AG04450 (cell line): ENCODE measurements at regions of chrX and their contacts with region 1.

Region 1: DNA sequence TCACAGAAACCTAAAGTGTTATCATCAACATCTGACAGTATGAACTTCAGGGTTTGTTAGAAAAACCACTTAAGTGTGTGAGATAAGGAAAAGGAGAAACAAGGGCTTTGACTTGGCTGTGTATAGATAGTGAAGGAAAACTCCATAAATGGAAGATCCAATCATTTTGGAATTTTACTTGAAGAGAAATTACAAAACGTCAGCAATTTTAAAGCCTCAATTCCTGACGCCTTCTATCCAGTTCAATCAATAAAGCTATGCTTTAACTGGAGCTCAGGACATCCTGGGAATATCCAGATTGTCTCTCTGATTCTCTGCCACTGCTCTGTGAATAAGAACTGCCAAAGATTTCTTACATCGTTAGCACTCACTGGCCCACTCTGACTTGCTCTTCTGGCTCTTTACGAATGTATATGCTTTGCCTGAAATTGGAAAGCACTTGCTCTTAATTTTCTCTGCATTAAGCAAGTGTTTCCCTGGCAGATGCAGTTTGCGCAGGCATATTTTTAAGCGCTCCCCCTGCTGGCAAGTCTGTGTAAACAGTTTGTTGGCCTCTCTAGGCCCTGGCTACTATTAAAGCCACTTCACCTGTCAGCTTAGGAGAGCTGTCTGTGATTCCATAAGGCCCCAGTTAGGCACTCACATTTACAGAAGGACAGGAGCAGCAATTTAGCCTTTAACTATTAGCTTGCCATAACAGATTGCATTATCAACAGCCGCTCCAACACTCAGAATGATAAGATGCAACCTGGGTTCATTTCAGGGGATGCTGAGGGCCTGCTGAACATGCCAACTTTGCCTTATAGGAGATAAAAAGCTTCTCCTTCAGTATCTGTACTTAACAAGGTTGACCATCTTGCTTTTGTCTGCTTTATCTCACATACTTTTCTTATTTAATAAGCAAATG is 251.4 kb upstream of the DDX53 start:
- DNase-seq: no peak
- H3K4me3 ChIP-seq: no peak overlapping the region
- H3K27ac ChIP-seq: no peak overlapping the region
- H3K27me3 ChIP-seq: no peaks in the 10 kb centered on the region
- CTCF ChIP-seq: peak; percentile 66

Region 2: GRCh38 chrX:22730542-22730941 is 17.8 kb before region 1 on chrX:
- CTCF ChIA-PET with region 1: interaction called, 10 read pairs
- POLR2A ChIA-PET with region 1: no interaction called
- DNase-seq: no peak
- H3K4me3 ChIP-seq: no peak overlapping the region
- H3K27ac ChIP-seq: no peak overlapping the region
- H3K27me3 ChIP-seq: no peaks in the 10 kb centered on the region
- CTCF ChIP-seq: no peak

Region 3: DNA sequence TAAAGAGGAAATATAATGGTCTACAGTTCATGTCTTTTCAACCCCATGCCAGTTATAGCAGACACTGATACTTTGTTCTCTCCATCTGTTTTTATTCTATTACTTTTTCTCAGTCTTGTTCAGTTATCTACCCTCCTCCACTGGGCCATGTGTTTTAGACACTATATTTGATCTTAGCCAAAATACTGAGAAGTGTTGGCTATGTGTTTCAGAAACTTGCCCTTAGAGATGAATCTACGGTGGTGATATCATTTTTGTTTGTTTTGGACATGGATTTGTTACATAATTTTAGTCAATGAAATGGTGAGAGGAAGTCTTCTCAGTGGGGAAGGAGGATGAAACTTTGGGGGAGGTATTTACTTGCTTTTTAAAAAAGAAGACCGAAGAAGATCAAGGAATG is 39.9 kb after region 1 on chrX:
- CTCF ChIA-PET with region 1: interaction called, 14 read pairs
- POLR2A ChIA-PET with region 1: no interaction called
- DNase-seq: no peak
- H3K4me3 ChIP-seq: no peak overlapping the region
- H3K27ac ChIP-seq: no peak overlapping the region
- H3K27me3 ChIP-seq: no peaks in the 10 kb centered on the region
- CTCF ChIP-seq: no peak